Activated CD4-positive, alpha-beta memory T cell treated with anti-CD3 and anti-CD28 coated beads for 36 hours (primary cell): ENCODE measurements at regions of chr20 and their contacts with region 1.

Region 1: DNA sequence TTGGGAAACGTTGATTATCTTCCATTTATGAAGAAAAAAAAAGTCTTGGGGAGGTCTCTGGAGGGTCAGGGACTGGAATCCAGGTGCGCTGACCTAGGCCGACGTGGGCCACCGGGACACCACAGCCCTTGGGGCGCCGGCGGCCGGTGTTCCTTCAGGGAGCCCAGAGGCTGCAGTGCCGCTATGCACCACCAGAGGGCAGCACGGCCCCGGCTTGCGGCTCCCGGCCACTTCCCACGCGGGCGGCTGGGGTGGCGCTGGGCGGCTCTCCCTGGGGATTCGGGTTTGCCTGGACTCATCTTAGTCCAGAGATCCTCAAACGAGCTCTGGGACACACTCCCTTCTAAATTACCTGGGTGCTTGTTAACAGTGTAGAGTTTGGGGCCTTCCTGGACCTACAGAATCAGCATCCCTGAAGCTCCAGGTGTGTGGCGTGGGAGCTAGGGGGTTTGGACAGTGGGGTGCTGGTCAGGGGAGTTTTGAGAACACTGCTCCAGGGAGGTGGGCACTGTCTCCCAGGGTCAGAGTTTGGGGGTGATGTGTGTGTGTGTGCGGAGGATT is 23.0 kb upstream of the GTSF1L start:
- DNase-seq: peak; percentile 88
- H3K4me3 Mint-ChIP-seq: no peak overlapping the region
- H3K27ac Mint-ChIP-seq: peak overlapping the region; percentile 55
- H3K4me1 Mint-ChIP-seq: peaks cover 42% of the 10 kb centered on the region
- H3K27me3 Mint-ChIP-seq: peaks cover 18% of the 10 kb centered on the region

Region 2: DNA sequence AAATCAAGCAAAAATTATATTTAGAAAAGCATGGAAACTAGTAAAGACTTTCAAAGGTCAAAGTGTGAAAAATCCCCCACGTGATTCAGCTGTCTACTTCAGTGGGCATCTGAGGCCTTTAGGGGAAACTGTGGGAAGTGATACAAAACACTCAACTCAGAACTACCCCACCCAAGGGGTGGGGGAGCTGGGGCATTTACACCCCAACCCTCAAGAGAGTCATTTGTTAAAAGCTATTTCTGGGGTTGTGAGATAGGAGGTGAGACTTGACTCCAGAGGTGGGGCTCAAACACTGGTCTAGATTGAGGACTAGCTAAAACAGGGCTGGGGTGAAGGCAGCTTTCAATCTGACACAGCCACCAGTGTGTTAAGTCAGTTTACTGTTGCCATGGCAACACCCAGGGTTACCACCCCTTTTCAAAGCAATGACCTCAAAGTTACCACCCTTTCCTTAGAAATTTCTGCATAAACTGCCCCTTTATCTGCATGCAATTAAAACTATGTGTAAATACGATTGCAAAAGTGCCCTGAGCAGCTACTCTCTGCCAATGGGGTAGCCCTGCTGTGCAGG is 13.1 kb before region 1 on chr20:
- CTCF ChIA-PET with region 1: interaction called, 16 read pairs
- POLR2A ChIA-PET with region 1: interaction called, 3 read pairs
- intact Hi-C with region 1: loop called (anchors 2 kb)
- DNase-seq: peak; percentile 67
- H3K4me3 Mint-ChIP-seq: no peak overlapping the region
- H3K27ac Mint-ChIP-seq: no peak overlapping the region
- H3K4me1 Mint-ChIP-seq: peaks cover 16% of the 10 kb centered on the region
- H3K27me3 Mint-ChIP-seq: no peaks in the 10 kb centered on the region

Region 3: DNA sequence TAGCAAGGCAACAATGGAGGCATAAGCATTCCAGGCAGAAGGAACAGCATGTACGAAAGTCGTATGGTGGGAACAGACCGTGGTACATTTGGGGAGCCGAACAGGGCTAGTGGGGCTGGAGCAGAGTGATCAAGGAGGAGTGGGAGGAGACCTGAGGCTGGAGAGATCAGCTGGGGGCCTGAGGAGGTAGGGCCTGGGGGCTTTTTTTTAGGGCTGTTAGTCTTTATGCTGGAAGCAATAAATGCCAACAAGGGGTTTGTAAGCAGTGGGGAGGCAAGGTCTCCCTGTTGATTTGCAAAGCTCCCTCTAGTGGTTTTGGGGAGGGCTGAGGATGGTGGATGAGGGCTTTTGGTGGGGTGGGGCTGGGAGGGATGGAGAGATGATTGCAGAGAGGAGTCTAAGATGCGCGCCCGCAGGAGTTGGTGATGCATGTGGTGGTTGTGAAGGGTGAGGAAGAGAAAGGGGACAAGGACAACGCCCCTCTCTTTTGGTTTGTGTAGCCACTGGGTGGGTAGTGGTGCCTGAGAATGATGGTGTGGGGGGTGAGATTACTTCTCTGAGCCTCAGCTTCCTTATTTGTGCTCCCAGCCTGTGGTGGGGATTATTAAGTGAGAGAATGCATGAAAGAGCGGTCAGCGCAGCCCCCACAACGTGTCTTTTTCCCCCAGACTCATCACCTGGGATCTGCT is 90.7 kb after region 1 on chr20:
- CTCF ChIA-PET with region 1: interaction called, 65 read pairs
- POLR2A ChIA-PET with region 1: interaction called, 10 read pairs
- intact Hi-C with region 1: loop called (anchors 1 kb)
- DNase-seq: peak; percentile 64
- H3K4me3 Mint-ChIP-seq: no peak overlapping the region
- H3K27ac Mint-ChIP-seq: no peak overlapping the region
- H3K4me1 Mint-ChIP-seq: peaks cover 31% of the 10 kb centered on the region
- H3K27me3 Mint-ChIP-seq: peaks cover 20% of the 10 kb centered on the region

Region 4: DNA sequence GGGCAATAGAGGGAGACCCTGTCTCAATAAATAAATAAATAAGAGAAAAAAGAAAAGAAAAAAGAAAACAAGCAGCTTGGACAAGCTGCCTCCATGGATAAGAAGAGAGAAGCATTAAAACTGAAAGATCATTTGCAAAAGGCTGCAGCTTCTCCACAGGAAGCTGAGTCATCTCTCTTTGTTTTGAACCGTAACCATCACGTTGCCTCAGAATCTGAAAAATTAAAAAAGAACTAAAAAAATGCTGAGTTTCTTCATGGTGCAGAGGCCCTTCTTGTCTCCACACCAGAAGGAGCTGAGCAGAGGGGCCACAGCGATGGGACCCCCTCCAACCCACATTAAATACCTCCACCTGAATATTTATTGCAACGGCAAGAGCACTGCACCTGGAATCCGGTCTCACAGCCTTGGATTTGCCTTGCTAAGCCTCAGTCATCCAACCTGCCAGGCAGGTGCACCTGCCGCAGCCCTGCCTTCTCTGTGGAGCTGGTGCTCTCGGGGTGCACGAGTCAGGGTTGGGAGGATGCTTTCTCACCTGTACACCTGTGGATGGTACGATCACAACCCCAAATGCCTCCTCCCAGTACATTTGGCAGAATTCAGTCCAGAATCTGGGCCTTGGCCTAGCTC is 193.0 kb after region 1 on chr20:
- CTCF ChIA-PET with region 1: interaction called, 13 read pairs
- POLR2A ChIA-PET with region 1: interaction called, 5 read pairs
- intact Hi-C with region 1: loop called (anchors 1 kb)
- DNase-seq: peak; percentile 33
- H3K4me3 Mint-ChIP-seq: peak overlapping the region; percentile 16
- H3K27ac Mint-ChIP-seq: peak overlapping the region; percentile 76
- H3K4me1 Mint-ChIP-seq: peaks cover 58% of the 10 kb centered on the region
- H3K27me3 Mint-ChIP-seq: peaks cover 18% of the 10 kb centered on the region

Region 5: GRCh38 chr20:44028868-44029847 is 279.3 kb after region 1 on chr20:
- CTCF ChIA-PET with region 1: interaction called, 11 read pairs
- POLR2A ChIA-PET with region 1: interaction called, 3 read pairs
- intact Hi-C with region 1: loop called (anchors 1 kb)
- DNase-seq: peak; percentile 71
- H3K4me3 Mint-ChIP-seq: peak overlapping the region; percentile 46
- H3K27ac Mint-ChIP-seq: peak overlapping the region; percentile 3
- H3K4me1 Mint-ChIP-seq: peaks cover 39% of the 10 kb centered on the region
- H3K27me3 Mint-ChIP-seq: peaks cover 20% of the 10 kb centered on the region

Region 6: GRCh38 chr20:44080646-44081267 is 330.9 kb after region 1 on chr20:
- CTCF ChIA-PET with region 1: interaction called, 109 read pairs
- POLR2A ChIA-PET with region 1: interaction called, 4 read pairs
- intact Hi-C with region 1: loop called (anchors 1 kb)
- DNase-seq: peak; percentile 85
- H3K4me3 Mint-ChIP-seq: no peak overlapping the region
- H3K27ac Mint-ChIP-seq: no peak overlapping the region
- H3K4me1 Mint-ChIP-seq: peaks cover 8% of the 10 kb centered on the region
- H3K27me3 Mint-ChIP-seq: no peaks in the 10 kb centered on the region